ENCODE measurements at regions of chr4 and their contacts with region 1.

Region 1: DNA sequence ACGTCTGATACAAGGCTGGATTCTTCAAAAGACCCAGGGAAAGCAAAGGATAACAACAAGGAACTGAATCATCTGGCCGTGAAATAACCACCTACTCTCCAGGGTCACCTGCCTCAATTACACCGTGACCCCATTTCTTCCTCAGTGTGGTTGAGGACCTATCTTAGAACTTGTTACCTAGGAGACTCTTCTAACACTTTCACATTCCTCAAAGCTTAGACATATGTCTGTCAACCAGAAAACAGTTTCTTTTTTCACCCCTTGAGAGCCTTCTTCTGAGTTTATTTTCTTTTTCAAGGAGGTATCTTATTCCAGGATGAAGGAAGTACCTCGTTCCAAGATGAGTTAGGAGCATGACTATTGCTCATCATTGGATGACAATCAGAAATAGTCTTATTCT is 337.8 kb downstream of the ARHGAP24 start:
- DNase-seq: no peak
- H3K4me3 ChIP-seq: no peak overlapping the region
- H3K27ac ChIP-seq: no peak overlapping the region
- H3K4me1 ChIP-seq: no peaks in the 10 kb centered on the region
- H3K27me3 ChIP-seq: no peaks in the 10 kb centered on the region
- CTCF ChIP-seq: no peak
- POLR2A ChIP-seq: no peak

Region 2: DNA sequence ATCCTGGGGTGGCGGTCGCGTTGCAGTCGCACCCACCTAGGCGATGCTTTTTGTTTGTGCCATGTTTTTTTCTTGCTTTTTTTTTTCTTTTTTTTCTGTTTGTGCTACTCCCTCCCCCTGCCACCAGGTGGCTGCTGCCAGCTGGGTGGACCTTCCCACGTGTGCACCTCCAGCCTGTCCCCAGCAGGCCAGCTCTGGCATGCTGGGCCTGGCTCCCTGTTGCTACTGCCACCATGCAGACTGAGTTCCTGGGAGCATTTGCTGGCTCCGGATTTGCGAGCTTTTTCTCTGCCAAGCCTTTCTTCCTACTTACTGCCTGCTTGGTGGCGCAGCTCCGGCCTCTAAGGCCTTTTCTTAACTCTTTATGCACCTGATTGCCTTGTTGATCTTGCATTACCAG is 685.1 kb before region 1 on chr4:
- intact Hi-C with region 1: no loop called
- DNase-seq: no peak
- H3K4me3 ChIP-seq: no peak overlapping the region
- H3K27ac ChIP-seq: no peak overlapping the region
- H3K4me1 ChIP-seq: no peaks in the 10 kb centered on the region
- H3K27me3 ChIP-seq: no peaks in the 10 kb centered on the region
- CTCF ChIP-seq: no peak
- POLR2A ChIP-seq: no peak

Region 3: DNA sequence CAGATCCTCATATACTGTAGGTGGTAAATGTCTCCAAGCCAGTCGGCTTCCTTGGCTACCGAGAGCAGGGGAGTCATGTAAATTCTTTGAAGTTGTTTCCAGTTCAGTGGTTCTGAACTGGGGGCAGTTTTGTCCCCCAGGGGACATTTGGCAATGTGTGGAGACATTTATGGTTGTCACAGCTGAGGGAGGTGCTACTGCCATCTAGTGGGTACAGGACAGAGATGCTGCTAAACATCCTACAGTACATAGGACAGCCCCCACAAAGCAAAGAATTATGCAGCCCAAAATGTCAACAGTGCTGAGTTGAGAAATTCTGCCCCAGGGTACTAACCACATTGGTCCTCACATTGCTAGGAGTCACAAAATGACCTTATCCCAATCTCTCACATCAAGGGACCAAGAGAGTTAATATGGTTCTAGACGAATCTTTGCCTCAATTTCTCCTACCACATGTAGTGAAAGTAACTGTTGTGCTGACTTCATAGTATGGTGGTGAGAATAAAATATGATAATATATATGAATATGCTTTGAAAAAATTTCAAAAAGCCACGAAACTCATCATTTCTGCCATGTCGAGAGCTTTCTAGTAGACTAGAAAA is 442.2 kb before region 1 on chr4:
- intact Hi-C with region 1: loop called (anchors 5 kb)
- DNase-seq: no peak
- H3K4me3 ChIP-seq: no peak overlapping the region
- H3K27ac ChIP-seq: no peak overlapping the region
- H3K4me1 ChIP-seq: no peaks in the 10 kb centered on the region
- H3K27me3 ChIP-seq: no peaks in the 10 kb centered on the region
- CTCF ChIP-seq: peak in 2 of 3 donors; percentile 18 to 32
- POLR2A ChIP-seq: no peak